ENCODE measurements at regions of chr22 and their contacts with region 1.

Region 1: GRCh38 chr22:29040385-29041275 is 21.0 kb downstream of the C22orf31 start:
- DNase-seq: no peak
- ATAC-seq: peak; percentile 86 to 88
- H3K4me3 ChIP-seq: no peak overlapping the region
- H3K27ac ChIP-seq: no peak overlapping the region
- H3K4me1 ChIP-seq: peaks cover 33% of the 10 kb centered on the region
- H3K27me3 ChIP-seq: no peaks in the 10 kb centered on the region
- CTCF ChIP-seq: peak; percentile 97

Region 2: GRCh38 chr22:28855355-28856094 is 185.1 kb before region 1 on chr22:
- intact Hi-C with region 1: loop called (anchors 10 kb)
- DNase-seq: no peak
- ATAC-seq: peak; percentile 80 to 82
- H3K4me3 ChIP-seq: no peak overlapping the region
- H3K27ac ChIP-seq: no peak overlapping the region
- H3K4me1 ChIP-seq: no peaks in the 10 kb centered on the region
- H3K27me3 ChIP-seq: no peaks in the 10 kb centered on the region
- CTCF ChIP-seq: peak; percentile 91